ENCODE measurements at regions of chr13 and their contacts with region 1.

Region 1: DNA sequence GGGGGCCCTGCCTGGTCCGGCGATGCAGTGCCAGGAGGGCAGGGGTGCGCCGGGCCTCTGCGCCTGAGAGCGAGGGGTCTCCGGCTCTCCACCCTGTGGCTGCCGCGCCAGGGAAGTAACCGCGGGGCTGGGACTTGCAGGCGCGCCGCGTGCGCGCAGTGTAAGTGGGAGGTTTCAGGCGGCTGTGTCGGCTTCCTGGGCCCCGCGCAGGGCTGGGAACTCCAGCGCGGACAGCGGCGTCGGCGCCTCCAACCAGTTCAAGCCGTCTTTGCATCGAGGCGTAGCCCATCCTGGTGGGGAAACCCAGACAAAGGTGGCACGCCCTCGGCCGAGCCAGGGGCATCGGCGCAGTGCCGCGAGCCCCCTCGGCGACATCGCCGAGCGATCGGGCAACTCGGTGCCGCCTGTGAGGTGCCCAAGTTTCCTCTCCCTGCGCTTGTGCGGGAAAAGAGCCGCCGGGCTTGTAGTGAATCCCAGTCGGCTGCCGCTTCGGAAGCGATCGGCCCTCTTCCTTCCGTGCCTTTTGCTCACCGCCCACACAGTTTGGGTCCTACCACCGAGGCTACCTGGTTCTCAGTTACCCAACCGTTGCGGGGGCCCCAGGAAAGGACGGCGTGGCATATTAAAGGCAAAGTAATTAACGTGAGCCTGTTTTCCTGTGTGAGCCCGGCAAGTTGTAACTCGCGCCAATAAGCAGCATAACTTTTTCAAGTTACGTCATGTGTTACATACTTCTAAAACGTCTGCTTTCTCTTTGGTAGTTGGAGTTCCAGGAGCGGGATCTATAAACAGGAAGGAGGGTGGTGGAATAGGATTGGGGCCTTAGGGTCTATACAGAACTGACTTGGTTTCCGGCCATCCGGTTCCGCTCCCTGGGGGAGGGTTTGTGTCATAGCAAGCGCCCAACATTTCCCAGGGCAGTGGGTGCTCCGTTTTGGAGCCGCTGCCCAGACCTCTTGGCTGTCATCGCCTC is 1.2 kb downstream of the LRCH1 start:
- DNase-seq: peak; percentile 66
- H3K4me3 Mint-ChIP-seq: peak overlapping the region; percentile 84
- H3K27ac Mint-ChIP-seq: peak overlapping the region; percentile 56
- H3K4me1 Mint-ChIP-seq: no peaks in the 10 kb centered on the region
- H3K27me3 Mint-ChIP-seq: no peaks in the 10 kb centered on the region
- CTCF ChIP-seq: no peak

Region 2: GRCh38 chr13:46492946-46493345 is 61.2 kb before region 1 on chr13:
- CTCF ChIA-PET with region 1: no interaction called
- intact Hi-C with region 1: loop called (anchors 2 kb)
- DNase-seq: peak; percentile 27
- H3K4me3 Mint-ChIP-seq: no peak overlapping the region
- H3K27ac Mint-ChIP-seq: no peak overlapping the region
- H3K4me1 Mint-ChIP-seq: no peaks in the 10 kb centered on the region
- H3K27me3 Mint-ChIP-seq: peaks cover 26% of the 10 kb centered on the region
- CTCF ChIP-seq: peak; percentile 11

Region 3: GRCh38 chr13:46603165-46603603 is 49.0 kb after region 1 on chr13:
- CTCF ChIA-PET with region 1: no interaction called
- intact Hi-C with region 1: loop called (anchors 5 kb)
- DNase-seq: no peak
- H3K4me3 Mint-ChIP-seq: no peak overlapping the region
- H3K27ac Mint-ChIP-seq: no peak overlapping the region
- H3K4me1 Mint-ChIP-seq: peaks cover 58% of the 10 kb centered on the region
- H3K27me3 Mint-ChIP-seq: no peaks in the 10 kb centered on the region
- CTCF ChIP-seq: peak; percentile 22

Region 4: GRCh38 chr13:46656786-46657185 is 102.6 kb after region 1 on chr13:
- CTCF ChIA-PET with region 1: no interaction called
- intact Hi-C with region 1: no loop called
- DNase-seq: no peak
- H3K4me3 Mint-ChIP-seq: no peak overlapping the region
- H3K27ac Mint-ChIP-seq: peak overlapping the region; percentile 44
- H3K4me1 Mint-ChIP-seq: peaks cover 16% of the 10 kb centered on the region
- H3K27me3 Mint-ChIP-seq: no peaks in the 10 kb centered on the region
- CTCF ChIP-seq: no peak

Region 5: GRCh38 chr13:46668302-46668720 is 114.1 kb after region 1 on chr13:
- CTCF ChIA-PET with region 1: no interaction called
- intact Hi-C with region 1: loop called (anchors 5 kb)
- DNase-seq: no peak
- H3K4me3 Mint-ChIP-seq: no peak overlapping the region
- H3K27ac Mint-ChIP-seq: no peak overlapping the region
- H3K4me1 Mint-ChIP-seq: peaks cover 33% of the 10 kb centered on the region
- H3K27me3 Mint-ChIP-seq: no peaks in the 10 kb centered on the region
- CTCF ChIP-seq: no peak

Region 6: GRCh38 chr13:46721054-46721453 is 166.9 kb after region 1 on chr13:
- CTCF ChIA-PET with region 1: interaction called, 9 read pairs
- intact Hi-C with region 1: loop called (anchors 1 kb)
- DNase-seq: peak; percentile 14
- H3K4me3 Mint-ChIP-seq: no peak overlapping the region
- H3K27ac Mint-ChIP-seq: no peak overlapping the region
- H3K4me1 Mint-ChIP-seq: no peaks in the 10 kb centered on the region
- H3K27me3 Mint-ChIP-seq: no peaks in the 10 kb centered on the region
- CTCF ChIP-seq: peak; percentile 47

Measured in Calu3 (cell line).